ENCODE measurements at regions of chr7 and their contacts with region 1.

Region 1: GRCh38 chr7:33185786-33186185 is 56.4 kb downstream of the BBS9 start:
- DNase-seq: peak in 1 of 35 experiments; percentile 62
- ATAC-seq: no peak
- H3K4me3 ChIP-seq: no peak overlapping the region
- H3K4me3 Mint-ChIP-seq: no peak overlapping the region
- H3K27ac ChIP-seq: no peak overlapping the region
- H3K27ac Mint-ChIP-seq: no peak overlapping the region
- H3K4me1 ChIP-seq: peaks cover 0 to 3% of the 10 kb centered on the region in 2 experiments
- H3K4me1 Mint-ChIP-seq: peaks cover 7 to 9% (median 8%) of the 10 kb centered on the region in 3 donors
- H3K27me3 ChIP-seq: no peaks in the 10 kb centered on the region
- H3K27me3 Mint-ChIP-seq: no peaks in the 10 kb centered on the region

Region 2: GRCh38 chr7:33157311-33157710 is 28.5 kb before region 1 on chr7:
- CTCF ChIA-PET with region 1: interaction called in 1 of 2 experiments, 4 read pairs
- POLR2A ChIA-PET with region 1: interaction called in 1 of 2 experiments, 13 read pairs
- DNase-seq: no peak
- ATAC-seq: no peak
- H3K4me3 ChIP-seq: no peak overlapping the region
- H3K4me3 Mint-ChIP-seq: no peak overlapping the region
- H3K27ac ChIP-seq: no peak overlapping the region
- H3K27ac Mint-ChIP-seq: no peak overlapping the region
- H3K4me1 ChIP-seq: no peaks in the 10 kb centered on the region
- H3K4me1 Mint-ChIP-seq: no peaks in the 10 kb centered on the region
- H3K27me3 ChIP-seq: no peaks in the 10 kb centered on the region
- H3K27me3 Mint-ChIP-seq: no peaks in the 10 kb centered on the region

Region 3: DNA sequence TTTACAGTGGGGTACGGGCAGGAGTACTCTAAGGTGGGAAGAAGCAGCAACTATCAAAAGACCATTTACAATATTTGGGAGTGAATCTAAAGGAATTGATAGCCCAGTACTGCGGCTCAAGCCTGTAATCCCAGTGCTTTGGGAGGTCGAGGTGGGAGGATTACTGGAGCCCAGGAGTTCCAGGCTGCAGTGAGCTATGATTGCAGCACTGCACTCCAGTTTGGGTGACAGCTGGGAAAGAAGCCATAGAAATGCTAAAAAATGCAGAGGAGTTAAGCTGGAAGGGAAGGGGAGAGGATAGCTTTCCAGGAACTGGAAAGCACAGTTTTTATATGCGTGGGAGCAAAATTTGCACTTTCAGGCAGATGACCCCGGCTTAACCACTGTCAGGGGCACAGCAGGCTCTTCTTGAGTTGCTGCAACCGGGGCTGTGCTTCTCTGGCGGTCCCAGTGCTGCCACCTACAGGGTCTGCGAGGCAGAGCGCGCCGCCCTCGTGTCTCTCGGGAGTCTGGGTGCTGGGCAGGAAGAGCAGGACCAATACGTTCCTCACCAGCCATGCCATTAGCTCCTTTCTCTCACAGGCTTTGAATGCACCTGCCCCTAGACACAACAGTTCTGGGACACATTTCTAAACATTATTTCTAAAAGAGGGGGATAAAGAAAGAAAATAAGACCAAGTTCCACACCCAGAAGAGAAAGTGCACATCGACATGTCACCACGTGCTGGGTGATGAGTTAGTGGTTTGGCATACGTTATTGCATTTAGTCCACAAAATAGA is 709.4 kb after region 1 on chr7:
- CTCF ChIA-PET with region 1: interaction called in 1 of 2 experiments, 11 read pairs
- POLR2A ChIA-PET with region 1: no interaction called
- DNase-seq: peak in 34 of 35 experiments; percentile 9 to 70 (median 52)
- ATAC-seq: peak; percentile 64 to 83 (median 76)
- H3K4me3 ChIP-seq: no peak overlapping the region
- H3K4me3 Mint-ChIP-seq: no peak overlapping the region
- H3K27ac ChIP-seq: no peak overlapping the region
- H3K27ac Mint-ChIP-seq: no peak overlapping the region
- H3K4me1 ChIP-seq: no peaks in the 10 kb centered on the region
- H3K4me1 Mint-ChIP-seq: peaks cover 2 to 9% (median 5%) of the 10 kb centered on the region in 3 donors
- H3K27me3 ChIP-seq: peaks cover 2 to 9% of the 10 kb centered on the region in 2 experiments
- H3K27me3 Mint-ChIP-seq: peaks cover 29 to 48% of the 10 kb centered on the region in 2 donors

Region 4: GRCh38 chr7:33932832-33933468 is 747.2 kb after region 1 on chr7:
- CTCF ChIA-PET with region 1: interaction called, 11 to 27 read pairs
- POLR2A ChIA-PET with region 1: no interaction called
- DNase-seq: peak; percentile 1 to 72 (median 44)
- ATAC-seq: peak in 2 of 4 experiments; percentile 53 to 56
- H3K4me3 ChIP-seq: no peak overlapping the region
- H3K4me3 Mint-ChIP-seq: no peak overlapping the region
- H3K27ac ChIP-seq: no peak overlapping the region
- H3K27ac Mint-ChIP-seq: no peak overlapping the region
- H3K4me1 ChIP-seq: no peaks in the 10 kb centered on the region
- H3K4me1 Mint-ChIP-seq: peaks cover 0 to 2% (median 2%) of the 10 kb centered on the region in 3 donors
- H3K27me3 ChIP-seq: peaks cover 0 to 8% of the 10 kb centered on the region in 2 experiments
- H3K27me3 Mint-ChIP-seq: peaks cover 17 to 24% of the 10 kb centered on the region in 2 donors